CD8-positive, alpha-beta T cell (primary cell): ENCODE measurements at regions of chr5 and their contacts with region 1.

Region 1: DNA sequence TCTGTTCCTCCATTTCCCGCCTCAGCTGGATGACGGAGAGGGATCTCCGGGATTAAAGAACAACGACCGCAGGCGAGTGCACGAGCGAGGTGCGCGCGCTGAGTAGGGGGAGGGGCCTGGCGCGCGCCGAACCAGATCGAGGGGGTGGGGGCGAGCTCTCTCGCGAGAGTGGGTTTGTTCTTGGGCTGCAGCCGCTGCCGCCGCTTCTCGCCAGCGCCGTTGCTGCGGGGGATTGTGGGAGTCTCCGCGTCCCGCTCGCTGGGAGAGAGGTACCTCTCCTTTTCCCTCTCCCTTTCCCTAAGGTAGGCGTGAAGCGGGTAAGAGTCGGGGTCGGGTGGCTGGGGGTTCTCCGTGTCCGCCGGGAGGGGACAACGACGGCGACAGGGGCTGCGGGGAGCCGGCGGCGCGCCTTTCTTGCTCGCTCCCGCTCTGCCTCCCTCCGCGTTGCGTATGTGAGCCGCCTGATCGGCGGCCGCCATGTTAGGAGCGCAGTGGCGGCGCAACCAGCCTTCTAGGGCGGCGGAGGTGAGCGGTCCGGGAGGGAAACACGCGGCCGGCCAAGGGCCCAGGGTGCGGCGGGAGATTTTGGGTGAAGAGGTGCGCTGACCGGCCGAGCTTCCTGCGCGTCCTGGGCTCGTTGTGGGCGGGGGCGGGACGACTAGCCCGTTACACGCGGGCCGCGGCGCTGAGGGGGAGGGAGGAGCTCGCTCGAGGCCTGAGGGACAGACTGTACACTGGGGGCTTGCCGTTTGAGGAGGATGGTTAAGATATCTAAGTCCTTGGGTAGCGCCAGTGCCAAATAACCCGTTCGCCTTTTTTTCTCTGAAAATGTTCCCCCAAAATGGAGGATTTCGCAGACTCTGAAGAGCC is at the start of gene MATR3:
- DNase-seq: peak; percentile 88 to 95 (median 93)
- ATAC-seq: peak; percentile 90
- H3K4me3 ChIP-seq: peak within 1 kb of the TSS; percentile 72 to 94
- H3K4me3 Mint-ChIP-seq: peak within 1 kb of the TSS; percentile 98
- H3K27ac ChIP-seq: peak within 1 kb of the TSS; percentile 98
- H3K27ac Mint-ChIP-seq: peak within 1 kb of the TSS; percentile 98
- H3K4me1 ChIP-seq: peaks cover 34% of the 10 kb centered on the region
- H3K4me1 Mint-ChIP-seq: peaks cover 41% of the 10 kb centered on the region
- H3K27me3 ChIP-seq: no peaks in the 10 kb centered on the region
- H3K27me3 Mint-ChIP-seq: no peaks in the 10 kb centered on the region
- CTCF ChIP-seq: no peak
- total RNA-seq, gene MATR3: 420 to 430 TPM

Region 2: GRCh38 chr5:139038613-139039305 is 255.0 kb before region 1 on chr5:
- CTCF ChIA-PET with region 1: no interaction called
- POLR2A ChIA-PET with region 1: no interaction called
- intact Hi-C with region 1: no loop called
- DNase-seq: no peak
- ATAC-seq: no peak
- H3K4me3 ChIP-seq: no peak overlapping the region
- H3K4me3 Mint-ChIP-seq: no peak overlapping the region
- H3K27ac ChIP-seq: no peak overlapping the region
- H3K27ac Mint-ChIP-seq: no peak overlapping the region
- H3K4me1 ChIP-seq: no peaks in the 10 kb centered on the region
- H3K4me1 Mint-ChIP-seq: no peaks in the 10 kb centered on the region
- H3K27me3 ChIP-seq: no peaks in the 10 kb centered on the region
- H3K27me3 Mint-ChIP-seq: no peaks in the 10 kb centered on the region
- CTCF ChIP-seq: no peak

Region 3: DNA sequence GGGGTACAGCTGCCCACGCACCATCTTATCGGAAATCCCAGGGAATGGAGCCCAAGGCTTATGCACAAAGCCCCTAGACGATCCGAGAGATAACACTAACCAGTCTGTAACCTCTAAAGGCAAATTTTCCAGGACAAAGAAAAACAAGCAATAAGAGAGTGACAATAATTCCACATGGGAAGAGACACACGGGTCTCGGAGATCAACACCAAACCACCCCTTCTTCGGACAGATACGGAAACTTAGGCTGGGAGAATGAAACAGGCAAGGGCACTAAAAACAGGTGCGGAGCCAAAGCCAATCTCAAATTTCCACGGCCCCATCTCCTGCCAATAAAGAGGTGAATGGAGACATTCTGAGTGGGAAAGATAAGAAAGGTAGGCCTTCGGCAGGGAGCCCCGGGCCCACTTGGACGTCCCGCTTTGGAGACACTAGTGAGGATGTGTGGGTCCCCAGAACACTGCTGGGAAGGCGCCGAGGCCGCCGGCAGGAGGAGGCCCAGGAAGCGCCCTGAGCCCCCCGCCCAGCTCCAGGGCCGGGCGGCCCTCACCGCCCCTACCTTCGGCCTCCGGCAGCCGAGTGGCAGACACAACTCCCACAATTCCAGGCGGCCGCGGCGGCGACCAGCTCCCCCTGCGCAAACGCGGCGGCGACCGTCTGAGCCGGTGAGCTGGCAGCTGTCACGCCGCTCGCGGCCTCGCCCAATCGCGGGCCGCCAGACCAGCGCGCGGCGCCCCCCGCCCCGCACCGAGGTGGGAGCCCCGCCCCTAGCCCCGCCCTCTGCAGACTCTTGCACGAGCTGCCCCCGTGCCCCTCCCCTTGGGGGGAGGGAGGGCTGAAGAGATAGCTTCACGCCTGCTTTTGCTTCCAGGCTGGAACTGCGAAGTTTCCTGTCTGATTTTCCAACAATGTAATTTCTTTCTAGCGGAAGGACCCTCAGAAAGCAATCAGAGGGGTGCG is 95.7 kb before region 1 on chr5 and contains the start of gene SIL1:
- CTCF ChIA-PET with region 1: no interaction called
- POLR2A ChIA-PET with region 1: interaction called, 6 read pairs
- intact Hi-C with region 1: loop called (anchors 5 kb)
- DNase-seq: peak; percentile 94 to 98 (median 96)
- ATAC-seq: peak; percentile 98
- H3K4me3 ChIP-seq: peak within 1 kb of the TSS; percentile 60 to 70
- H3K4me3 Mint-ChIP-seq: peak within 1 kb of the TSS; percentile 84
- H3K27ac ChIP-seq: peak within 1 kb of the TSS; percentile 82 to 84
- H3K27ac Mint-ChIP-seq: peak within 1 kb of the TSS; percentile 91
- H3K4me1 ChIP-seq: peaks cover 8% of the 10 kb centered on the region
- H3K4me1 Mint-ChIP-seq: peaks cover 24% of the 10 kb centered on the region
- H3K27me3 ChIP-seq: no peaks in the 10 kb centered on the region
- H3K27me3 Mint-ChIP-seq: no peaks in the 10 kb centered on the region
- CTCF ChIP-seq: no peak
- total RNA-seq, gene SIL1: 14.0 to 19.5 TPM

Region 4: DNA sequence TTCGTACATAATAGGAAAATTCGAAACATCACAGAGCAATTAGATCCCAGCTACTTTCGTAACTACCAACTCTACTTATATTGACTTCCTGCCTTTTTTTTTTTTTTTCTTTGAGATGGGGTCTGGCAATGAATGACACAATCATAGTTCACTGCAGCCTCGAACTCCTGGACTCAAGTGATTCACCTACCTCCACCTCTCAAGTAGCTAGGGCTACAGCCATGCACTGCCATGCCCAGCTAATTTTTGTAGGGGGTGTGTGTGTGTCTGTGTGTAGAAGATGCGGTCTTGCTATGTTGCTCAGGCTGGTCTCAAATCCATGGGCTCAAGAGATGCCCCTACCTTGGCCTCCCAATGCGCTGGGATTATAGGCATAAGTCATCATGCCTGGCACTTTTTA is 42.1 kb after region 1 on chr5:
- CTCF ChIA-PET with region 1: interaction called, 4 read pairs
- POLR2A ChIA-PET with region 1: interaction called, 75 read pairs
- intact Hi-C with region 1: loop called (anchors 1 kb)
- DNase-seq: peak in 2 of 9 experiments; percentile 28 to 41
- ATAC-seq: peak; percentile 27
- H3K4me3 ChIP-seq: no peak overlapping the region
- H3K4me3 Mint-ChIP-seq: no peak overlapping the region
- H3K27ac ChIP-seq: peak overlapping the region in 1 of 2 experiments; percentile 6
- H3K27ac Mint-ChIP-seq: peak overlapping the region; percentile 71
- H3K4me1 ChIP-seq: peaks cover 2% of the 10 kb centered on the region
- H3K4me1 Mint-ChIP-seq: peaks cover 11% of the 10 kb centered on the region
- H3K27me3 ChIP-seq: no peaks in the 10 kb centered on the region
- H3K27me3 Mint-ChIP-seq: no peaks in the 10 kb centered on the region
- CTCF ChIP-seq: no peak

Region 5: DNA sequence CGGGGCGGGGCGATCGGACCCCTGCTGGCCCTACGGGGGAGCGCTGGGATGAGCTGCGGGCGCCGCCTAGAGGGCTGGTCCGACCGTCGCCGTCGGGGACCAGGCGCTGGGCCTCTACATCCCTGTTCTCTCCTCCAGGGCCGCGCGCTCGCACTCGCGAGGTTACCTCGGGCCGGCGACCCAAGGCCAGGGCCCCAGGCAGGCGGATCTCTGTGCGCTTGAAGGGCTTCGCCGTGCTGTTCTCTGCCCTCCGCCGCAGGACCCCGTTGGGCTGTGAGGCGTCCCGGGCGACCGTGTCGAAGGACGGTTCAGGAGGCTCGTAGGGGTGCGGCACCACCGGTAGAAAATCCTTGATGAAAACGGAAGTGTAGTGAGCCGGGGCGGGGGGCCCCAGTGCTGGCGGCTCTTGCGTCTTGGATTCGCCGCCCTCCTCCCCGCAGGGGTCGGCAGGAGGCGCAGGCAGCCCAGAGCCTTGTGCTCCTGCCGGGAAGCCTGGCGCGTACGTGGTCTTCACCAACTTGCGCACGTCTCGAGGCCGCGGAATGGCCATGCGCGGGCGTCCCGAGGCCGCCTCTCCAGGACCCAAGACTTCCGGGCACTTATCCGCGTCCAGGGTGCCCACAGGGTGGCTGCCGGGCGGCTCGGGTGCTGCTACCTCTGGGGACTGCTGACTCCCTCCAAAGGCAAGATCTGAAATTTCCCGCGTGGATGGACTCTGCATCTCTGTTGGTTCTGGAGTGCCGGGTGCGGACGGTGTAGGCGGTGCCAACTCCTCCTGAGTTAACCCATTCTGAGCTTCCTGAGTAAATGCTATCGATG is 99.1 kb after region 1 on chr5:
- CTCF ChIA-PET with region 1: interaction called, 4 read pairs
- POLR2A ChIA-PET with region 1: no interaction called
- intact Hi-C with region 1: loop called (anchors 1 to 5 kb)
- DNase-seq: peak; percentile 48 to 88 (median 75)
- ATAC-seq: peak; percentile 62
- H3K4me3 ChIP-seq: peak overlapping the region; percentile 72 to 84
- H3K4me3 Mint-ChIP-seq: peak overlapping the region; percentile 90
- H3K27ac ChIP-seq: peak overlapping the region in 1 of 2 experiments; percentile 29
- H3K27ac Mint-ChIP-seq: peak overlapping the region; percentile 60
- H3K4me1 ChIP-seq: peaks cover 44% of the 10 kb centered on the region
- H3K4me1 Mint-ChIP-seq: peaks cover 42% of the 10 kb centered on the region
- H3K27me3 ChIP-seq: no peaks in the 10 kb centered on the region
- H3K27me3 Mint-ChIP-seq: no peaks in the 10 kb centered on the region
- CTCF ChIP-seq: peak; percentile 62

Region 6: GRCh38 chr5:139593716-139594319 is 300.1 kb after region 1 on chr5:
- CTCF ChIA-PET with region 1: no interaction called
- POLR2A ChIA-PET with region 1: no interaction called
- intact Hi-C with region 1: no loop called
- DNase-seq: no peak
- ATAC-seq: no peak
- H3K4me3 ChIP-seq: no peak overlapping the region
- H3K4me3 Mint-ChIP-seq: no peak overlapping the region
- H3K27ac ChIP-seq: no peak overlapping the region
- H3K27ac Mint-ChIP-seq: peak overlapping the region; percentile 57
- H3K4me1 ChIP-seq: peaks cover 52% of the 10 kb centered on the region
- H3K4me1 Mint-ChIP-seq: peaks cover 60% of the 10 kb centered on the region
- H3K27me3 ChIP-seq: no peaks in the 10 kb centered on the region
- H3K27me3 Mint-ChIP-seq: no peaks in the 10 kb centered on the region
- CTCF ChIP-seq: no peak

Region 7: DNA sequence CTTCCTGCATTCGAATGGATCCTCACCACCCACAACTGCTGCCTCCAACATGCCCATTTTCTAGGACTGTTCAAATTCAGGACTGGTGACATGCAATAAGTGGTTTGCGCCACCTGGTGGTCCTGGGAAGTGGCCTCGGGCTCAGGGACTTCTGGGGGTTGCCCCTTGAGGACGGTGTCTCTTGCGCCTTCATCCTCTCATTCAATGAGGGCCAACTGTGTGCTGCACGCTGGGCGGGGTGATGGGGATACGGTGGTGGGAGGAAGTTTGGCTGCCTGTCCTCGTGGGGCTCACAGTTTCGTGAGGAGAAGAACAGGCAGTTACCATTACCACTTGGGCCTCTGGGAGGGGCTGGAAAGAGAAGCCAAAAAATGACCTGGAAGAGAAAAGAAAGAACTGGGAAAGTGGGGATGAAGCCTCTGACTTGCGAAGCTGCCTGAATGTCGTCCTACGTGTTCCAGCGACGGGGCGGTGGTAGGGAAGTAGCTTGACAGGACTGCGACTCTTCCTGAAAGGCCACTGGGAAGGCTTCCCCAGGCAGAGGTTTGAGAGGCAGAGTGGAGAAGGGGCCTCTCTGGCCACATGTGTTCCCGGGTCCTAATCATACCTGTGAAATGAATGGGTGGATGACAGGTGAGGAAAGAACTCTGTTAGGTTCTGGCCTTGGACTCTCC is 550.9 kb after region 1 on chr5:
- CTCF ChIA-PET with region 1: no interaction called
- POLR2A ChIA-PET with region 1: interaction called, 3 read pairs
- intact Hi-C with region 1: loop called in 1 of 2 experiments (anchors 5 kb)
- DNase-seq: peak; percentile 50 to 83 (median 77)
- ATAC-seq: peak; percentile 24
- H3K4me3 ChIP-seq: no peak overlapping the region
- H3K4me3 Mint-ChIP-seq: no peak overlapping the region
- H3K27ac ChIP-seq: no peak overlapping the region
- H3K27ac Mint-ChIP-seq: no peak overlapping the region
- H3K4me1 ChIP-seq: no peaks in the 10 kb centered on the region
- H3K4me1 Mint-ChIP-seq: peaks cover 15% of the 10 kb centered on the region
- H3K27me3 ChIP-seq: no peaks in the 10 kb centered on the region
- H3K27me3 Mint-ChIP-seq: peaks cover 18% of the 10 kb centered on the region
- CTCF ChIP-seq: peak; percentile 76